ENCODE measurements at regions of chr7 and their contacts with region 1.

Region 1: GRCh38 chr7:1137510-1138167 is 22.4 kb downstream of the ZFAND2A start:
- DNase-seq: no peak
- H3K4me3 Mint-ChIP-seq: peak overlapping the region; percentile 74
- H3K27ac Mint-ChIP-seq: peak overlapping the region; percentile 94
- H3K4me1 Mint-ChIP-seq: peaks cover 11% of the 10 kb centered on the region
- H3K27me3 Mint-ChIP-seq: no peaks in the 10 kb centered on the region
- CTCF ChIP-seq: no peak

Region 2: DNA sequence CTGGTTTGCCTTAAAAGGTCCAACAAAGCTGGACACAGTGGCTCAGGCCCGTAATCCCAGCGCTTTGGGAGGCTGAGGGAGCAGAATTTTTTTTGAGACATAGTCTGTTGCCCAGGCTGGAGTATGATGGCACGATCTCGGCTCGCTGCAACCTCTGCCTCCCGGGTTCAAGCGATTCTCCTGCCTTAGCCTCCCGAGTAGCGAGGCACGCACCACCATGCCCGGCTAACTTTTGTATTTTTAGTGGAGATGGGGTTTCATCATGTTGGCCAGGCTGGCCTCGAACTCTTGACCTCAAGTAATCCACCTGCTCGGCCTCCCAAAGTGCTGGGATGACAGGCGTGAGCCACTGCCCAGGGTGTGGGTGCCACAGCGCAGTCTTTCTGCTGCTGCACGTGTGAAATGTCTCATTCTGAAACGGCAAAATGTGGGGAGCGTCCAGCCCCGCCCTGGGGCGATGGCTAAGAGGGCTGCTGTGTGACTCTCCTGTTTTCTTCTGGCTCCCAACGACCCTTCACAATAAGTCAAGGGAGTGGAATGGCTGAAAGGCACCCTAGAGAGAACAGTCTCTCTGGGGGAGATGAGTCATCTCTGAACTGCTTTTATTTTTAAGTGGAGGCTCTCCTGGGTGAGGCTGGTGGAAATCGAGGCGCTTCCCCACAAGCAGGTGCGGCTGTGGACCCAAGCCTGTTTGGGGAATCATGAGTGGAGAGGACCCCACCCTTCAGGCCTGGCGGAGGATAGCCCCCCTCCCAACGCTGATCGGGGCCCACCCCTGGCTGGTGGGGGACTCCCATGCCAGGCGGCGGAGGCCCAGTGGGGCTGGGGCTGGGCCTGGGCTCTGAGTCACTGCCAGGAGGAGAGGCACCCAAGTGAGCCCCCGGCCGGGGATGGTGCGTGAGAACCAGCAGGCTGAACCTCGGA is 201.2 kb before region 1 on chr7:
- CTCF ChIA-PET with region 1: no interaction called
- POLR2A ChIA-PET with region 1: no interaction called
- intact Hi-C with region 1: no loop called
- DNase-seq: peak; percentile 83
- H3K4me3 Mint-ChIP-seq: no peak overlapping the region
- H3K27ac Mint-ChIP-seq: no peak overlapping the region
- H3K4me1 Mint-ChIP-seq: no peaks in the 10 kb centered on the region
- H3K27me3 Mint-ChIP-seq: peaks cover 9% of the 10 kb centered on the region
- CTCF ChIP-seq: no peak

Region 3: DNA sequence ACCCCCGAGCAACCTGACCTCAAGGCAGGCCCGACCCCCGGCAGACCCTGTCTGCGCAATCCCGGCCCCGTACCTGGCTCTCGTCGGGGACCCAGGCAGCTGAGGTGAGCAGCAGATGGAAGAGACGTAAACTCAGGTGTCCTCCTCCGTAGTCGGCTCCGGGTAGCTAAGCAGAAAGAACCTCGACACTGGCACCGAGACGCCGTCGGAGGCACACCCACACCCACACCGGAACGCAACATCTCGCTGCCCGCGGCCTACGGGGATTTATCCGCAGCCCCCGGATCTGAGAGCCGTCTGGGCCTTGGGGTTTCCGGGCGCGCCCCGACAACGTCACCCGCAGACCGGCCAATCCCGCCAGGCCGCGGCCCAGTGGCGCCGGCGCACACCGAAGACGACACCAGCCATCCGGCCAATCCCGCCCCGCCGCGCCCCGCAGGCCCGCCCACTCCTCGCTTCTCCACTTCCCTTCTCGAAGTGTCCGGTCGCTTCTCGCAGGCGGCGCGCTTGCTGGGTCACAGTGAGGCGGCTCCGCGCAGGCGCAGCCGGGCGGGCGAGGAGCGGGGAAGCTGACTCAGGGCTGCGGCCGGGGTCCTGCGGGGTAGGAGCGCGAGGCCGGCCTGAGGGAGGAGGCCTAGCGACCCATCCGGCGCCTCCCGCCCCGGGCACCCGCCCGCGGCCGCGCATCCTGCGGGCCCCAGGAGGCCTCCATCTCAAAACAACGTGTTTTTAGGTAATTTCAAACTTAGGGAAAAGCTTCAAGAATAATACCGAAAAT is 22.4 kb after region 1 on chr7 and contains the start of gene ZFAND2A:
- CTCF ChIA-PET with region 1: interaction called, 5 read pairs
- POLR2A ChIA-PET with region 1: interaction called, 25 read pairs
- intact Hi-C with region 1: no loop called
- DNase-seq: peak; percentile 97
- H3K4me3 Mint-ChIP-seq: peak within 1 kb of the TSS; percentile 92
- H3K27ac Mint-ChIP-seq: peak within 1 kb of the TSS; percentile 86
- H3K4me1 Mint-ChIP-seq: peaks cover 9% of the 10 kb centered on the region
- H3K27me3 Mint-ChIP-seq: no peaks in the 10 kb centered on the region
- CTCF ChIP-seq: no peak
- total RNA-seq, gene ZFAND2A: 30.1 and 40.7 TPM in 2 replicates

Region 4: DNA sequence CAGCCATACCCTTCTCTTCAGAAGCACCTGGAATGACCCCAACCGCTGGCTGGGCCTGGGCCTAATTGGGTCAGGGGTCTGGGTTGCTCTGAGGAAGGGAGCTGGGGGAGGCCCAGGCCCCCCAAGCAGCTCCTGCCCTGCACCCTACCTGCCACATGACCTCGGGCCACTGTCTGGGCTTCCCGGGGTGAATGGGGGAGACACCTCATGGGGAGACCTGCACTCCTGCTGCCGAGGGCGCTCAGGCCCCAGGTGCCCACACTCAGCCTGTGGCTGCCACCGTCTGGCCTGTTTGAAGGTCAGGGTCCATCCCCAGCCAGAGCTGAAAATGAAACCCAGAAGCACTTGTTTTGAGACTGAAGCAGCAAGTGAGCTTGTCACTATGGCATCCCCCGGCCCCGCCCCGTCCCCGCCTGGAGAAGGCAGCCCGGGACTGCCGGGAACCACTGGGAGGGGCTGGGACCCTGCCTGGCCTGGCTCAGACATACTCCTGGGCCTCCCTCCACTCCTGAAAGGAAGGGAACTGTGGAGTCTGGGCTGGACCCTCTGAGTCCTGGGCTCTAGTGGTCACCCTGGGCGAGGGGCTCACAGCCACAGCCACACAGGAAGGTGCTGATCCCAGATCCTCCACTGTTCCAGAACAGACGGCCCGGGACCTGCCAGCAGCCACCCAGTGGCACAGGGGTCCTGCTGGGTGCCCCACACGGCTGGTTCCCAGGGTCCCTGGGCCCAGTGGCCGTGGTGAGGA is 329.1 kb after region 1 on chr7:
- CTCF ChIA-PET with region 1: no interaction called
- POLR2A ChIA-PET with region 1: no interaction called
- intact Hi-C with region 1: no loop called
- DNase-seq: no peak
- H3K4me3 Mint-ChIP-seq: no peak overlapping the region
- H3K27ac Mint-ChIP-seq: no peak overlapping the region
- H3K4me1 Mint-ChIP-seq: peaks cover 15% of the 10 kb centered on the region
- H3K27me3 Mint-ChIP-seq: no peaks in the 10 kb centered on the region
- CTCF ChIP-seq: no peak